ENCODE measurements at regions of chr6 and their contacts with region 1.

Region 1: DNA sequence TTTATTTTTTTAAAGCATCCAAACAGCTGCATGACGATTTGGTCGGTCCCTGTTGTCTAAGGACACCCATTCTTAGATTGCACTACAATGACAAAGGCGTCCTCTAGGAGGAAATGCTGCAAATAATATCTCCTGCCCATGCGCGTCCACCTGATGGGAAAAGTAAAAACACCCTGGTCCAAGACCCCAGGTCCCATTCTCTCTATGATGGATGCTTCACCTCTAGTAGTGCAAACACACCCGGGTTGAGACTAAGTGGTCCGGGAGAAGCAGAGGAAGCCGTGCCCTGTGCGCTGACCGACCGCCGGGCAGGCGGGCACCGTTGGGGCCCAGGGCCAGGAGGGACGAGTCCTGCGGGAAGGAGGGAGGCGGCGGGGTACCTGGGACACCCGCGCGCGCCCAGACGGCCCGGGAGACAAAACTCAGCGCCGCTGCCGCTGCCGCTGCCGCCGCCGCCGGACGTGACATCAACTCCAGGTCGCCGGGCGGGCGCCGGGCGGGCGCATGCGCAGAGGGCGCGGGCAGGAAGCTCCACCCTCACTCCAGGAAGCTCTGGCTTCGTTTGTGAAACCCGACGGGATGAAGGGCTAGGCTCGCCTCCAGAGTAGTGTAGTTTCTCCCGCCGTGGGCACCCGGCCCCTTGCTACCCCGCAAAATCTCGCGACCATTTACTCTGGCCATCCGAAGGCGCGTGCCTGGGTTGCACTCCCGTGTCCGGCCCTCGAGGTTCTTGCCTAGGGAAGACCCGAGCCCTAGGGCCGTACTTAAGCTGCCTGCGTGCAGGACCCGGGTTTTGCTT is at the start of gene TBC1D7:
- DNase-seq: peak; percentile 63
- ATAC-seq: peak; percentile 91
- H3K4me3 ChIP-seq: peak within 1 kb of the TSS; percentile 90
- H3K27ac ChIP-seq: peak within 1 kb of the TSS; percentile 87
- H3K4me1 ChIP-seq: peaks cover 5% of the 10 kb centered on the region; the same call in 1 of the 2 replicates
- H3K27me3 ChIP-seq: no peaks in the 10 kb centered on the region
- CTCF ChIP-seq: 0 out of 6 replicates have a peak, but pooled peaks of 1 of the 3 experiments have one; percentile 1
- EP300 ChIP-seq: no peak
- POLR2A ChIP-seq: peak; percentile 92
- RAD21 ChIP-seq: no peak
- polyA plus RNA-seq, gene TBC1D7: 36.5 to 39.3 TPM

Region 2: DNA sequence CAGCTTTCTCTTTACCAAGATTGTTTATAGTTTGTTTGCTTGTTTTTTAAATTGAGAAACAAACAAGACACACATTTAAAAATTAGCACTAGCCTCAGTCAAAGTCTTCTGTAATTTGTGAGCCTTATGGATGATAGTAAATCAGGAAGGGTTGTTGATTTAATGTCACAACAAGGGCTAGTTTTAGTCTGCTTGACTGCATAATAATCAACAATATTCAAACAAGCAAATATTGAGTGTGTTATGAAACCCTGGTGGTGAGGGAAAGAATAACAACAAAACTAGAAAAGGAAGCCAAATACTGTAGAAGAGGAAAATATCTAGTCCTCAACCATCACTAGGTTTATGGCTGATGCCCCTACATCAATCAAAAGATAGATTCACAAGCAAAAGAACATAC is 228.5 kb before region 1 on chr6:
- CTCF ChIA-PET with region 1: no interaction called
- POLR2A ChIA-PET with region 1: no interaction called
- RAD21 ChIA-PET with region 1: no interaction called
- SMC1A ChIA-PET with region 1: no interaction called
- in situ Hi-C with region 1: no loop called
- intact Hi-C with region 1: no loop called
- DNase-seq: no peak
- ATAC-seq: no peak
- H3K4me3 ChIP-seq: no peak overlapping the region
- H3K27ac ChIP-seq: no peak overlapping the region
- H3K4me1 ChIP-seq: no peaks in the 10 kb centered on the region
- H3K27me3 ChIP-seq: no peaks in the 10 kb centered on the region; a peak in 1 of 4 replicates
- CTCF ChIP-seq: 0 out of 6 replicates have a peak, but pooled peaks of 2 of the 3 experiments have one; percentile 8 to 21
- EP300 ChIP-seq: no peak
- POLR2A ChIP-seq: no peak
- RAD21 ChIP-seq: no peak

Region 3: GRCh38 chr6:13120483-13121482 is 207.5 kb before region 1 on chr6:
- CTCF ChIA-PET with region 1: no interaction called
- POLR2A ChIA-PET with region 1: no interaction called
- RAD21 ChIA-PET with region 1: no interaction called
- SMC1A ChIA-PET with region 1: no interaction called
- in situ Hi-C with region 1: no loop called
- intact Hi-C with region 1: no loop called
- DNase-seq: no peak
- ATAC-seq: no peak
- H3K4me3 ChIP-seq: no peak overlapping the region
- H3K27ac ChIP-seq: no peak overlapping the region
- H3K4me1 ChIP-seq: no peaks in the 10 kb centered on the region
- H3K27me3 ChIP-seq: no peaks in the 10 kb centered on the region; a peak in 2 of 4 replicates
- CTCF ChIP-seq: no peak
- EP300 ChIP-seq: no peak
- POLR2A ChIP-seq: no peak
- RAD21 ChIP-seq: no peak

Region 4: GRCh38 chr6:13194852-13195251 is 133.4 kb before region 1 on chr6:
- CTCF ChIA-PET with region 1: interaction called, 169 read pairs
- POLR2A ChIA-PET with region 1: interaction called, 8 read pairs
- RAD21 ChIA-PET with region 1: interaction called, 124 read pairs
- SMC1A ChIA-PET with region 1: interaction called, 52 read pairs
- in situ Hi-C with region 1: loop called (anchors 5 kb)
- intact Hi-C with region 1: loop called (anchors 1 kb)
- DNase-seq: no peak
- ATAC-seq: peak; percentile 89
- H3K4me3 ChIP-seq: no peak overlapping the region
- H3K27ac ChIP-seq: no peak overlapping the region
- H3K4me1 ChIP-seq: no peaks in the 10 kb centered on the region
- H3K27me3 ChIP-seq: peaks cover 1 to 10% of the 10 kb centered on the region in 2 experiments; a peak in 3 of 4 replicates
- CTCF ChIP-seq: peak; percentile 68 to 76 (median 75)
- EP300 ChIP-seq: no peak
- POLR2A ChIP-seq: no peak
- RAD21 ChIP-seq: peak; percentile 92

Region 5: GRCh38 chr6:13229205-13230085 is 98.8 kb before region 1 on chr6:
- CTCF ChIA-PET with region 1: interaction called, 124 read pairs
- POLR2A ChIA-PET with region 1: interaction called, 19 read pairs
- RAD21 ChIA-PET with region 1: interaction called, 83 read pairs
- SMC1A ChIA-PET with region 1: interaction called, 119 read pairs
- in situ Hi-C with region 1: no loop called
- intact Hi-C with region 1: loop called (anchors 1 kb)
- DNase-seq: peak; percentile 88
- ATAC-seq: peak; percentile 94
- H3K4me3 ChIP-seq: peak overlapping the region; percentile 57
- H3K27ac ChIP-seq: peak overlapping the region; percentile 38
- H3K4me1 ChIP-seq: peaks cover 27% of the 10 kb centered on the region
- H3K27me3 ChIP-seq: no peaks in the 10 kb centered on the region
- CTCF ChIP-seq: peak; percentile 52 to 87 (median 79)
- EP300 ChIP-seq: peak; percentile 60 to 71; a peak in 3 of 4 replicates
- POLR2A ChIP-seq: peak; percentile 21; the same call in 1 of the 2 replicates
- RAD21 ChIP-seq: peak; percentile 85

Region 6: DNA sequence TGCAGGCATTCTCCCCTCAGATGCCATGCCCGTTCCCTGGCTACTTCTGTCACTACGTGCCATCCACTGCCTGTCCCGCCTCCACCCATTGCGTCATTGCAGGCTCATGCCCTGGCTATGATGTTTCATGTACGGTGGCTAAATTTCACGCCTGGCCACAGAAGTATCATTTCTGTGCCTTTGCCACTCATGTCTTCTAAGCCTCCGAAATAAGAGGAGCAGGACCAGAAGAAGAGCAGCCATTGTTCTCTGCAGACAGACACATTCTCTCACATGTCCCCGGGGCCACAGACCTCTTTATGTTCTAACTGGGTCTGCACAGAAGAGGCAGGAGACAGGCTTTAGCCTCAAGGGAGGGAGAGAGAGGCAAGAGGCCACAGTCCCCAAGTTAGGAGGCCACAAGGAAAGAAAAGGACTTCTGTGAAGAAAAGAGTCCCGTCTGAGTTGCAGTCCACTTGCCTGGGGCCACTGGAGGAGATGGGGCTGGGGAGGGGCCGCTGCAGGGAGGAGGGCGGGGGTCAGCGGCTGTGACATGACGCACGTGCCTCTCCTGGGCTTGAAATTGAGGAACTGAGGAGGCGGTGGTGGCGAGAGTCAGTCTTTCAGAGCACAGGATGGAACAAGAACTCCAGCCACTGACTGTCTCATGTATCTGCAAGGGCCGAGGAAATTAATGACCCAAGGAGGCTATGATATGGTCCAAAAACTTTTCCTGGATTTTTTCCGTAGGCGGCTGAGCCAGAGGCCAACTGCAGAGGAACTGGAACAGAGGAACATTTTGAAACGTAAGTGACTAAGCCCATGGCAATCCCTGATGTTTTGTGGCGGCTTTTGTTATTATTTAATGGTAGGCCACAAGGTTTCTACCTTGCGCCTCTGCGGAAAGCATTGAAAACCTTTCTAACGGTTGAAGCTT is 55.9 kb before region 1 on chr6:
- CTCF ChIA-PET with region 1: interaction called, 31 read pairs
- POLR2A ChIA-PET with region 1: interaction called, 22 read pairs
- RAD21 ChIA-PET with region 1: interaction called, 50 read pairs
- SMC1A ChIA-PET with region 1: interaction called, 96 read pairs
- in situ Hi-C with region 1: no loop called
- intact Hi-C with region 1: loop called (anchors 2 kb)
- DNase-seq: peak; percentile 67
- ATAC-seq: peak; percentile 72
- H3K4me3 ChIP-seq: peak overlapping the region; percentile 82
- H3K27ac ChIP-seq: peak overlapping the region; percentile 92
- H3K4me1 ChIP-seq: peaks cover 20% of the 10 kb centered on the region
- H3K27me3 ChIP-seq: no peaks in the 10 kb centered on the region; a peak in 1 of 4 replicates
- CTCF ChIP-seq: peak in 2 of 3 experiments; percentile 20 to 37; a peak in 3 of 6 replicates
- EP300 ChIP-seq: peak; percentile 53 to 72; a peak in 1 of 4 replicates
- POLR2A ChIP-seq: peak; percentile 86
- RAD21 ChIP-seq: peak; percentile 44; the same call in 1 of the 2 replicates

Region 7: DNA sequence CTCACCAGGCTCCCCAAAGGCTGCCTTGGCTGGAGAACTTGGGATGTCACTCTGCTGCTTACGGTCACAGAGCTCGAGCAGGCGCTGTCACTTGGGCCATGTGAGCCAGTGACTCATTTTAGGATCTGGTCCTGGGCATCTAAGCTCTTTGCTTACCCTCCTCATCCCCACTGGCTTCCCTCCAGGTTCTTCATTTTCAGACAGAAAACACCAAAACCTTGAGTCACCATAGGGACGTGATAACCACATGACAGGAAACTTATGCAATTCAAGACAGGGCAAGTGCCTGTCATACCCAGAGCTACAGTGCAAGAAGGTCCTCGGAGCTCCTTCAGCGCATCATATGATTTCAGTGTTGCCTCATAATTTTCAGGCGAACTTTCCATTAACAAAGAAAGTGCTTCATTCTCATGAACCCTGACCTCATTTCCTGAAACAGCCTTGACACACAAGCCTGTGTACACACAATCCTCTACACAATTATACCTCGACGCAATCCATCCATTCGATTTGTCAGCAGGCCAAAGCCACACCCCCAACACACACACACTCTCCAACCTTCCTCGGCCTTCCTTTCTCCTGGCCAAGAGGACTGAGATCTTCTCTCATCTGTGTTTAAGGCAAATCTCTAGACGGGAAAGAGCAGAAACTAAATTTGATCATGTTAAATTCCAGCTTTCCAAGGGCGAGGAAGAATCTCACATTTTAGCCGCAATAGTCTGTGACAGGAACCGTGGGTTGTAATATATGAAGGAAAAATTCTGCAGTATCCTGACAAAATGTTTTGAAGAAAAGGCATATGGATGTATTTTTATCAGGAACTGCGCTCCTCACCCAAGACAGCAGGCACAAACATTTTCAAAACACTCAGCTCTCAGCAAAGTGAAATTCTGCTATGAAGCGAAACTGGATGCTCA is 25.3 kb before region 1 on chr6:
- CTCF ChIA-PET with region 1: interaction called, 35 read pairs
- POLR2A ChIA-PET with region 1: interaction called, 18 read pairs
- RAD21 ChIA-PET with region 1: interaction called, 88 read pairs
- SMC1A ChIA-PET with region 1: interaction called, 47 read pairs
- in situ Hi-C with region 1: no loop called
- intact Hi-C with region 1: loop called (anchors 2 kb)
- DNase-seq: peak; percentile 90
- ATAC-seq: peak; percentile 86
- H3K4me3 ChIP-seq: peak overlapping the region; percentile 34
- H3K27ac ChIP-seq: peak overlapping the region; percentile 90
- H3K4me1 ChIP-seq: peaks cover 33% of the 10 kb centered on the region
- H3K27me3 ChIP-seq: no peaks in the 10 kb centered on the region
- CTCF ChIP-seq: no peak
- EP300 ChIP-seq: peak in 1 of 2 experiments; percentile 74; a peak in 3 of 4 replicates
- POLR2A ChIP-seq: no peak; the same call in 1 of the 2 replicates
- RAD21 ChIP-seq: no peak

Region 8: DNA sequence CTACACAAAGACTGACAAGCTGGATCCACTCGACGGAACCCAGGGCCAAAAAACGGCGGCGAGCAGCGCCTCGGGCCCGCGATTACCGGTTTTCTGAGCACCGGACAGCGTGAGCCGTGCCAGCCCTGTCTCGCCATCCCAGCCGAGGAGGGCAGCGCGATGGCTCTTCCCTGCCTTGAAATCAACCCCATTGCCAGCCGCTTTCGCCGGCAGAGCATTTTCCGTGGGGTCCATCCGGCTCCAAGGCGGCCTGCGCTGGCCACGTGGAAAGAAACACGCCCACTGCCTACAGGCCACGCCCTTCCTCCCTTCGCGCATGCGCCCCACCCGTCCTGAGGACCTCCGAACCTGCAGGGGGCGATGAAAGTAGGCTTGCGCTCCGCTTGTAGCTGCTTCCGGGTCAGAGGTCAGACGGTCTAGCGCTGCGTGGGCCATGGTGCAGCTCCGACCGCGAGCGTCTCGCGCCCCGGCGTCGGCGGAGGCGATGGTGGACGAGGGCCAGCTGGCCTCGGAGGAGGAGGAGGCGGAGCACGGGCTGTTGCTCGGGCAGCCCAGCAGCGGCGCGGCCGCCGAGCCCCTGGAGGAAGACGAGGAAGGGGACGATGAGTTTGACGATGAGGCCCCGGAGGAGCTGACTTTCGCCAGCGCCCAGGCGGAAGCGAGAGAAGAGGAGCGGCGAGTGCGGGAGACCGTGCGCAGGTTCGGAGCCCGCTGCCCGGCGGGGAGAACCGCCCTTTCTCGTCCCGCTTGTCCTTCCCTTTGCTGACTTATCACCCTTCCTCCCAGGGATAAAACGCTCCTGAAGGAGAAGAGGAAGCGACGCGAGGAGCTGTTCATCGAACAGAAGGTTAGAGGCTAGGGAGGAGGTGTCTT is 286.9 kb after region 1 on chr6 and contains the start of gene NOL7:
- CTCF ChIA-PET with region 1: interaction called, 11 read pairs
- POLR2A ChIA-PET with region 1: no interaction called
- RAD21 ChIA-PET with region 1: interaction called, 8 read pairs
- SMC1A ChIA-PET with region 1: interaction called, 3 read pairs
- in situ Hi-C with region 1: no loop called
- intact Hi-C with region 1: no loop called
- DNase-seq: peak; percentile 95
- ATAC-seq: peak; percentile 91
- H3K4me3 ChIP-seq: peak within 1 kb of the TSS; percentile 94
- H3K27ac ChIP-seq: peak within 1 kb of the TSS; percentile 96
- H3K4me1 ChIP-seq: peaks cover 17% of the 10 kb centered on the region
- H3K27me3 ChIP-seq: no peaks in the 10 kb centered on the region
- CTCF ChIP-seq: peak; percentile 96 to 99 (median 98); a peak in 5 of 6 replicates
- EP300 ChIP-seq: no peak
- POLR2A ChIP-seq: peak; percentile 99
- RAD21 ChIP-seq: no peak
- polyA plus RNA-seq, gene NOL7: 12.2 to 31.2 TPM

Measured in GM12878 (cell line).